ENCODE measurements at regions of chr17 and their contacts with region 1.

Region 1: DNA sequence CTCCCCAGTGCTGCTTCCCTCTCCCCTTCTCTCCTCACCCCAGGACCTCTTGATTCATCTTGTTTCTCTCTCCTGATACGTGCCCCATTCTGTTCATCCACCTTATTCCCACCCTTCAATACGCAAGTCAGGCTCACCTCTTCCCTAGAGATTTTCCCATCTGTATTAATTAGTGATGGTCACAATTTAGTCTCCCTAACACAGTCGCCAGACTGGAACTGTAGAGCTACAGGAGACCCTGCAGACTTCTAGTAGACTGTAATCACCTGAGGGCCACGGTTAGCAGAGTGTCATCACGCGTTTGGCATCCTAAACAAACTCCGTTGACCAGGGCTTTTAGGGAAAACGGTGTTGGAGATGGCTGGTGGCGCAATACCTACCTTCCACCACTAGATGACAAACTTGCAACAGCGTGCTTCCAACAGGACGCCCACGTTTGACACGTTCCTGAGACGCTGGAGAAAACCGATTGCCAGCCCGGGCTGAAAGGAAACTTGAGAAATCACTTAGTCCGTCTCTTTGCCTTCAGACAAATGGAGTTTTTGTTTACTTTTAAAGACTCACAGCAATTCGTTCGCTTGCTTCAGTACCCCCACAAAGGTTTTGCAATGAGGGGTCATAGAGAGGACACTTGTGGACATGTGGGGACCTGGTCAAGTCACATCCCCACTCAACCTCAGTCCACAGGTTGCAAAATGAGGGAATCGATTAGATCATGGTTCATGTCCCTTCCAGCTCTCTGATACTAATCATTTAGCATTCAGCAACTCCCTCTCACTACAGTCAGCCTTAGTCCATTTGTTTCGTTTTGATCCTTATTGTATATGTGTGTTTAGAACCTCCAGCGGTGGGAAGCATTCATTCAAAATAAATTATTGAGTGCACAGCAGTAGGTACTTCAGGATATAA is 20.6 kb downstream of the MYL4 start:
- DNase-seq: peak; percentile 48
- ATAC-seq: peak; percentile 95
- H3K4me3 Mint-ChIP-seq: peak overlapping the region; percentile 56
- H3K27ac Mint-ChIP-seq: no peak overlapping the region
- H3K4me1 Mint-ChIP-seq: peaks cover 26% of the 10 kb centered on the region
- H3K27me3 Mint-ChIP-seq: no peaks in the 10 kb centered on the region
- CTCF ChIP-seq: peak; percentile 83

Region 2: DNA sequence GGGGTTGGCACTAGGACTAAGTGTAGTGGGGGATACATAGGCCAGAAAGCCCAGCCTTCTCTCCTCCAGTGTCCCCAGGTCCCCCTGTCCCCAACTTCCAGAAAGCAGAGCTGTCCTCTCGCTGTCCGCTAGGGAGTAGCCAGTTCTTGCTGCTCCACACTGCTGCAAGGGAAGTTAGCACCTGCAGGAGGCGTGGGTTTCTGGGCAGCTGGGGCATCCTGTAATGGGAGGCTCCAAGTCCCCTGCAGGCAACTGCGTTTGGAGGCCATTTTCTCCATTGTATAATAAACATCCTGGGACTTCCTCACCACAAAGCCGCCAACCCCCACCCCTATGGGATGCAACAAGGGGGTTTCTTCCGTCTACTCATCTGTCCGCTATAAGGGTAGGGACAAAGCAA is 252.4 kb before region 1 on chr17:
- CTCF ChIA-PET with region 1: no interaction called
- POLR2A ChIA-PET with region 1: no interaction called
- intact Hi-C with region 1: no loop called
- DNase-seq: no peak
- ATAC-seq: no peak
- H3K4me3 Mint-ChIP-seq: no peak overlapping the region
- H3K27ac Mint-ChIP-seq: no peak overlapping the region
- H3K4me1 Mint-ChIP-seq: peaks cover 19% of the 10 kb centered on the region
- H3K27me3 Mint-ChIP-seq: peaks cover 20% of the 10 kb centered on the region
- CTCF ChIP-seq: no peak

Region 3: GRCh38 chr17:47244697-47245096 is 14.9 kb after region 1 on chr17:
- CTCF ChIA-PET with region 1: interaction called, 4 read pairs
- POLR2A ChIA-PET with region 1: no interaction called
- intact Hi-C with region 1: loop called (anchors 2 kb)
- DNase-seq: no peak
- ATAC-seq: no peak
- H3K4me3 Mint-ChIP-seq: no peak overlapping the region
- H3K27ac Mint-ChIP-seq: no peak overlapping the region
- H3K4me1 Mint-ChIP-seq: peaks cover 33% of the 10 kb centered on the region
- H3K27me3 Mint-ChIP-seq: no peaks in the 10 kb centered on the region
- CTCF ChIP-seq: no peak

Region 4: DNA sequence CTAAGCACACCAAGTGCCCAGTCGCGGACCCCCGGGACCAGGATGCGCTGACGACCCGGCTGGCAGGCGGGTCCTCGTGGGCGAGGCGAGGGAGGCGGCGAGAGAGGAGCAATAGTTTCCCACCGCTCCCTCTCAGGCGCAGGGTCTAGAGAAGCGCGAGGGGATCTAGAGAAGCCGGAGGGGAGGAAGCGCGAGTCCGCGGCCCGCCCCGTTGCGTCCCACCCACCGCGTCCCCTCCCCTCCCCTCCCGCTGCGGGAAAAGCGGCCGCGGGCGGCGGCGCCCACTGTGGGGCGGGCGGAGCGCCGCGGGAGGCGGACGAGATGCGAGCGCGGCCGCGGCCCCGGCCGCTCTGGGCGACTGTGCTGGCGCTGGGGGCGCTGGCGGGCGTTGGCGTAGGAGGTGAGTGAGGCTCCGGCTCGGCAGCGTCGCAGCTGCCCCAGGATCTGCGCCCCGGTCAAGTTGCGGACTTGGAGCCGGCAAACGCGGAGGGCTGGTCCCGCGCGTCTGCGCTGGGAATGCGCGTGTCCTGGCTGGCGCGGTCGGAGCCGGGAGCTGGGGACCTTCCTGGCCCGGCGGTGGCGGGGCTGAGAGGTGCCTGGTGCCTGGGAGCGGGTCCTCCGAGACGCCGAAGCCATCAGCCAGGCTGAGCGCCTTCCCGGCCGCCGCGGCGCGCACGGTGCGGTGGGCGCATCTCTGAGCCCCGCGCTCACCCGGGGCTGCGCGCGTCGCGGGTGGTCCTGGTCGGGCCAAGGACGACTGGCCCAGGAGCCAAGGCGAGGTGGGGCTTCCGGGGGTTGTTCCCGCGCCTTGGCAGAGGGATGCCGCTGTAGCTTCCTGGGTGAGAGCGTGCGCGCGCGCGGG is 24.0 kb after region 1 on chr17 and contains the start of gene ITGB3:
- CTCF ChIA-PET with region 1: no interaction called
- POLR2A ChIA-PET with region 1: no interaction called
- intact Hi-C with region 1: loop called (anchors 1 kb)
- DNase-seq: peak; percentile 78
- ATAC-seq: peak; percentile 97
- H3K4me3 Mint-ChIP-seq: peak within 1 kb of the TSS; percentile 91
- H3K27ac Mint-ChIP-seq: peak within 1 kb of the TSS; percentile 74
- H3K4me1 Mint-ChIP-seq: peaks cover 17% of the 10 kb centered on the region
- H3K27me3 Mint-ChIP-seq: no peaks in the 10 kb centered on the region
- CTCF ChIP-seq: no peak
- total RNA-seq, gene ITGB3: 4.1 and 4.7 TPM in 2 replicates

Region 5: GRCh38 chr17:47286198-47286914 is 56.6 kb after region 1 on chr17:
- CTCF ChIA-PET with region 1: interaction called, 13 read pairs
- POLR2A ChIA-PET with region 1: interaction called, 11 read pairs
- intact Hi-C with region 1: loop called (anchors 2 kb)
- DNase-seq: peak; percentile 50
- ATAC-seq: peak; percentile 84
- H3K4me3 Mint-ChIP-seq: peak overlapping the region; percentile 57
- H3K27ac Mint-ChIP-seq: peak overlapping the region; percentile 92
- H3K4me1 Mint-ChIP-seq: peaks cover 54% of the 10 kb centered on the region
- H3K27me3 Mint-ChIP-seq: no peaks in the 10 kb centered on the region
- CTCF ChIP-seq: no peak

Region 6: GRCh38 chr17:47615766-47616424 is 386.1 kb after region 1 on chr17:
- CTCF ChIA-PET with region 1: interaction called, 5 read pairs
- POLR2A ChIA-PET with region 1: no interaction called
- intact Hi-C with region 1: loop called (anchors 1 kb)
- DNase-seq: no peak
- ATAC-seq: peak; percentile 47
- H3K4me3 Mint-ChIP-seq: no peak overlapping the region
- H3K27ac Mint-ChIP-seq: no peak overlapping the region
- H3K4me1 Mint-ChIP-seq: no peaks in the 10 kb centered on the region
- H3K27me3 Mint-ChIP-seq: no peaks in the 10 kb centered on the region
- CTCF ChIP-seq: peak; percentile 60